ENCODE measurements at regions of chr6 and their contacts with region 1.

Region 1: DNA sequence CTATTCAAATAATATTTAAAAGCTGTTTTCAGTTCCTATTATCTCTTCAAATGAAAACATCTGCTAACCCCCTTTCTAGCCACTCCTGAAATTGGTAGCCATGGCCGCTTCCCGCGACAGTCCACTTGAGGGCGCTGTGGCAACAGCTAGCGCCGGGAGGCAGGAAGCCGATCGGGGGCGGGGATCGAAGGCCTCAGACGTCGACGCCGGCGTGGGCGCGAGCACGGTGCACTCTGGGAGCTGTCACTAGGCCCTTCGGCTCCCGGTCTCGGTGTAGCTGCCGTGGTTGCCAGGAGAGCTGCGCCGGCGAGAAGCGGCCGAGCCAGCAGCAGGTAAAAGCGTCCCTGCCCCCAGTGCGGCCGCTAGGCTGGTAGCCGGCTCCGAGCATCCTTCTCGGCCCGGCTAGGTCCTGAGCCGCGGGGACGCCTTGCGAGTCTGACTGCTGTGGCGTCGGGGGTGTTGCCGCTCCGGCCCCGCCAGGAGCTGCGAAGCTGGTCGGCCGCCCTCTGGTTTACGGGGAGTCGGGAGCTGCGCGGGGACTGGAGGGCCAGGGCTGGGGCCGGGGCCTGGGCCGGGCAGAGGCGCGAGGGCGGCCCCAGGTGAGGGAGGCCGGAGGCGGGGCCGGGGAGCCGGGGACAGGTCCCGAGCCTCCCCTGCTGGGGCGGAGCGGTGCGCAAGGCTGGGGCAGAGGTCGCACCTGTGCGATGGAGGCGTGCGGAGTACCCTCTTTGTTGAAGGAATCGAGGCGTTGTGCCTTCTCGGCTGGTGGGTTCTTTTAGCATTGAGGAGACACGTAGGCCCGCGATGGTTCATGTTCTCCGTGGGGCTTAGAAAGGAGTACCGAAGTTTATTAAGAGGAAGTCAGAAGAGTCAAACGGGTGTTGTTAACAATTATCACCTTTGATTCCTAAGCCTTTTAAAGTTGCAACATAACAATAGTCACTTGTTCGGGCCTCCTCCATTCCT is at the start of gene DOP1A:
- DNase-seq: peak; percentile 86
- ATAC-seq: peak; percentile 88
- H3K4me3 ChIP-seq: peak within 1 kb of the TSS; percentile 68 to 75
- H3K27ac ChIP-seq: peak within 1 kb of the TSS; percentile 73
- H3K4me1 ChIP-seq: peaks cover 2 to 23% of the 10 kb centered on the region in 2 experiments; a peak in 3 of 4 replicates
- H3K27me3 ChIP-seq: no peaks in the 10 kb centered on the region
- CTCF ChIP-seq: peak; percentile 92 to 95 (median 94)
- POLR2A ChIP-seq: peak; percentile 34
- RAD21 ChIP-seq: peak; percentile 98
- total RNA-seq, gene DOP1A: 7.1 TPM

Region 2: GRCh38 chr6:82247634-82248232 is 820.0 kb before region 1 on chr6 and contains the start of gene IBTK:
- CTCF ChIA-PET with region 1: interaction called, 18 read pairs
- POLR2A ChIA-PET with region 1: no interaction called
- RAD21 ChIA-PET with region 1: no interaction called
- intact Hi-C with region 1: no loop called
- DNase-seq: peak; percentile 86
- ATAC-seq: peak; percentile 80
- H3K4me3 ChIP-seq: peak within 1 kb of the TSS; percentile 86 to 90
- H3K27ac ChIP-seq: peak within 1 kb of the TSS; percentile 72
- H3K4me1 ChIP-seq: peaks cover 14 to 27% of the 10 kb centered on the region in 2 experiments
- H3K27me3 ChIP-seq: no peaks in the 10 kb centered on the region
- CTCF ChIP-seq: no peak
- POLR2A ChIP-seq: no peak
- RAD21 ChIP-seq: no peak
- total RNA-seq, gene IBTK: 36.6 TPM

Region 3: DNA sequence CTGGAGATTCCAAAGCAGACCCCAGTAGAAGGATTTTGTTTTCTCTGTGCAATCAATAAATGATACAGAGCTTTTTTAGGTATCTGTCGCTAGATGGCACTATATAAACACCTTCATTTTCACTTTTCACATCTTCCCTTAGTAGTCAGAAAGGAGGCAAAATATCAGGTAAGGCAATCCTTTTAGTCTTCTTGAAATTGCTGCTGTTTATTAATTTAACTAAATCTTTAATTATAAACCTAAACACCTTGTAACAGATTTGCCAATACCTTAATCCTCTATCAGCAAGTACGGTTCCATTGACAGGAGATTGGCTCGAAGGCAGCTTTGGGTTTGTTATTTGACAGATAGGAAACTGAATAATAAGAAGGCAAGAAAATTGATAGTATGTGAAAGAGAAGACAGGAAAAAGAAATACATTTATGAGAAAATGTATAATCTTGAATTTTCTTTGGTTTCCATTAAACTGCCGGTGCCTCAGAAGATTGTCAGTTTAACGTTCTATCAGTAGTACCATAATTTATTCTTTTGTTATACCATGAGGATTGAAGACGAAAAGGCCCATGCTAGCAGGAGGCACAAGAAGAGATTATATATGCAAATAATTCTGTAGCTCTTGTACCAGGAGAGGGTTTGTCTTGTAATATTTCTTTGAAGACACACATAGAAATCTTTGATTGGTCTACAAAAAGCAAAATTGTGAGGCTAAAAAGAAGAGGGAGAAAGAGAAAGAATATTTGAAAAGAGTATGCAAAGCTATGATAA is 796.7 kb before region 1 on chr6:
- CTCF ChIA-PET with region 1: interaction called, 15 read pairs
- POLR2A ChIA-PET with region 1: no interaction called
- RAD21 ChIA-PET with region 1: no interaction called
- intact Hi-C with region 1: no loop called
- DNase-seq: peak; percentile 24
- ATAC-seq: peak; percentile 64
- H3K4me3 ChIP-seq: no peak overlapping the region
- H3K27ac ChIP-seq: no peak overlapping the region
- H3K4me1 ChIP-seq: peaks cover 4 to 15% of the 10 kb centered on the region in 2 experiments; a peak in 3 of 4 replicates
- H3K27me3 ChIP-seq: no peaks in the 10 kb centered on the region
- CTCF ChIP-seq: peak; percentile 43 to 76 (median 75); a peak in 5 of 6 replicates
- POLR2A ChIP-seq: no peak
- RAD21 ChIP-seq: peak; percentile 81

Region 4: DNA sequence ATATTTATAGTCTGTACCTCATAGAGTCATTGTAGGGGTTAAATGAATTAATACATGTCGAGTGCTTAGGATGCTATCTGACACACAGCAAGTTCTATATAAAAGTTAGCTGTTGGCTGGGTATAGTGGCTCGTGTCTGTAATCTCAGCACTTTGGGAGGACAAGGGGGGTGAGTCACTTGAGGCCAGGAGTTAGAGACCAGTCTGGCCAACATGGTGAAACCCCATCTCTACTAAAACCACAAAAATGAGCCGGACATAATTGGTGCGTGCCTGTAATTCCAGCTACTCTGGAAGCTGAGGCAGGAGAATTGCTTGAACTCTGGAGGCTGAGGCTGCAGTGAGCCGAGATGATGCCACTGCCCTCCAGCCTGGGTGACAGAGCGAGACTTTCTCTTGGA is 225.0 kb before region 1 on chr6:
- CTCF ChIA-PET with region 1: no interaction called
- POLR2A ChIA-PET with region 1: no interaction called
- RAD21 ChIA-PET with region 1: no interaction called
- intact Hi-C with region 1: no loop called
- DNase-seq: no peak
- ATAC-seq: no peak
- H3K4me3 ChIP-seq: no peak overlapping the region
- H3K27ac ChIP-seq: no peak overlapping the region
- H3K4me1 ChIP-seq: no peaks in the 10 kb centered on the region
- H3K27me3 ChIP-seq: no peaks in the 10 kb centered on the region
- CTCF ChIP-seq: no peak
- POLR2A ChIP-seq: no peak
- RAD21 ChIP-seq: no peak

Region 5: DNA sequence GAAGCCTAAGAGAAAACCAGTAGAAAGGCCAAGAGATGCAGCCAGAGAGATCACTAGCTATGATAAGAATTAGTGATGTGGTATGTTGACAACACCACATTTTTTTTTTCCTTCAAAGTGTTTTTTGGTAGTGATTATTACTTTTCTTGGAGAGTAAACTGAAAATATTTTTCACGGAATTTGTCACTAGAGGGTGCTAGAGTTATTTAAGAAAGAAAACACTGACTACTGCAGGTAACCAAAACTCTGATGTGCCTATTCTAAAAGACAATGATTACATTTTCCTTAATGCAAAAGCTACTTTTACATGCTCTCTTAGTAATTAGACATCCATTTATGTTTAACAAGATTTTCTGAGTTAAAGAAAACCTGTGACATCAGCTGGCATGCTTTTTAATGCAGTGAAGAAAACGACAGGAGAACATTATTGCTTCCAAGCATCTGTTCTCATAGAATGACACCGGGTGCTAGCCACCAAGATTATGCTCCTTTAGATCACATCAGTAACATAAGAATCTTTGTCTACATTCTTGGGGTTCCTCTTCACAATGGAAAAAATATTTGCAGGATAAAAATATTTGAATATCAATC is 154.3 kb after region 1 on chr6:
- CTCF ChIA-PET with region 1: interaction called, 82 read pairs
- POLR2A ChIA-PET with region 1: no interaction called
- RAD21 ChIA-PET with region 1: no interaction called
- intact Hi-C with region 1: no loop called
- DNase-seq: peak; percentile 18
- ATAC-seq: no peak
- H3K4me3 ChIP-seq: no peak overlapping the region
- H3K27ac ChIP-seq: no peak overlapping the region
- H3K4me1 ChIP-seq: peaks cover 0 to 6% of the 10 kb centered on the region in 2 experiments; a peak in 1 of 4 replicates
- H3K27me3 ChIP-seq: no peaks in the 10 kb centered on the region
- CTCF ChIP-seq: peak; percentile 30 to 67 (median 51); a peak in 5 of 6 replicates
- POLR2A ChIP-seq: no peak
- RAD21 ChIP-seq: peak; percentile 76

Region 6: DNA sequence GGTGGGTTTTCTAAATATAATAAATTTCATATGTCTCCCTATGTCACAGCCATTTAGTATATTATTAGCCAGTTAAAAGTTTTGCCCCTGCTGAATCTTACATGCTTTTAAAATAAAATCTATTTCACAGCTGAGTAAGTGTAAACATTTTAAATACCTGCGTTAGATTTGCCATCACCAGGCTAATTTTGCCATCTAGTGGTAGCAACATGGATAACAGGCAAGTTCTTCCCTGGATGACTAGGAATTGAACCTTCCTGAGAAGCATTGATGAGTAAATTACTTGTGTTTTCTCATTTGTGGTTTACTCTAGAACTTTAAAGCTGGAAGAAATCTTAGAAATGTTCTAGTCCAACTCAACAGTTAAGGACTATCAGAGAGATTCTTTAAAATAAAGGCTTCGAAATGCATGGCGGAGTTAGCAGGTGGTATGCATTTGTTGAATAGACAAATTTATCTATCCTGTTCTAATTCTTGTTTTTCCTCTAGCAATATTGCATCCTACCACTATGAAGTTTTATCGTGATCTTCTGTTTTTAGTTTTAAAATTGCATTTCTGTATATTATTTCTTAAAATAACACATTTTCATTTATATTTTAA is 447.2 kb after region 1 on chr6:
- CTCF ChIA-PET with region 1: interaction called, 120 read pairs
- POLR2A ChIA-PET with region 1: interaction called, 4 read pairs
- RAD21 ChIA-PET with region 1: interaction called, 4 to 5 read pairs
- intact Hi-C with region 1: loop called (anchors 1 kb)
- DNase-seq: peak; percentile 57
- ATAC-seq: no peak
- H3K4me3 ChIP-seq: no peak overlapping the region
- H3K27ac ChIP-seq: no peak overlapping the region
- H3K4me1 ChIP-seq: peaks cover 0 to 10% of the 10 kb centered on the region in 2 experiments; a peak in 1 of 4 replicates
- H3K27me3 ChIP-seq: no peaks in the 10 kb centered on the region
- CTCF ChIP-seq: peak; percentile 77 to 92 (median 88)
- POLR2A ChIP-seq: no peak
- RAD21 ChIP-seq: peak; percentile 94

Measured in HCT116 (cell line).